ENCODE measurements at regions of chr18 and their contacts with region 1.

Region 1: DNA sequence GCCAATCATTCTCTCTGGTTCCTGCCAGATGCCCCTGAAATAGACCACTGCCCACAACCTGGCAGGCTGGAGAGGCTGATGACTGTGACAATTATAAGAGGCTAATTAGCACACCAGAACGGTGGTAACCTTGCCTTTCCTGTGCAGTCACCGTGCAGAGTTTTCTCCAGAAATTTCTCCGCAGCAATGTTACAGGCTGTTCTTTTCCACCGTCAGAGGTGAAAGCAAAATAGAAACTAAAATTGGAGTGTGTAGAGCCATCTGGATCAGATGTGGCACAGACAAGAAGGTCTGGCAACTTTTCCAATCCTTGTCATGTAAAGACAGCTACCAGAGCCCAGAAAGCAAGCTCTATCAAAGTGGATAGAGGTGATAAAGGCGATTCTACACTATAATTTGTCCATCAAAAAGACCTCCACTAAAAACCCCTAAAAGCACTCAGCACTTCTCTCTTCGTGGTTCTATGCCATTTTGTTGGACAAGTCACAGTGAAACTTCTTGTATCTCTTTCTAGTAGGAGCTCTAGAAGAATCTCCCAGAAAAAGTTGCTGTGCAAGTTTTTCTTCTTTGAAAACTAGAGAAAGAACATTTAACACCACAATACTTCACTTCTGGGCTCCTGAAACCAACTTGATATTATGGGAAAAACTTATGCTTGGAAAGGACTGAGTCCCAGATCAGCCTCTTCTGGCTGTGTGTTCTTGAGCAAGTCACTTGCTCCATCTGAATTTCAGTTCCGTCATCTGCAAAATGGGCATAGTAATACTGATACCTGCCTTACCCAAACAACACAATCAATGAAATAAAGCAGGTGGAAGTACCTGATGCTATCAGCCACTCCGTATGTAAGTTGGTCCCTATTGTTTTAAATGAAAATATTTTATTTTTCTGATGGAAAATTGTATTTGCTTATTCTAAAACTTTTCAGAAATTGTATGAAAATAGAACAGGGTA is 295.6 kb upstream of the DLGAP1 start:
- DNase-seq: no peak
- ATAC-seq: no peak

Region 2: DNA sequence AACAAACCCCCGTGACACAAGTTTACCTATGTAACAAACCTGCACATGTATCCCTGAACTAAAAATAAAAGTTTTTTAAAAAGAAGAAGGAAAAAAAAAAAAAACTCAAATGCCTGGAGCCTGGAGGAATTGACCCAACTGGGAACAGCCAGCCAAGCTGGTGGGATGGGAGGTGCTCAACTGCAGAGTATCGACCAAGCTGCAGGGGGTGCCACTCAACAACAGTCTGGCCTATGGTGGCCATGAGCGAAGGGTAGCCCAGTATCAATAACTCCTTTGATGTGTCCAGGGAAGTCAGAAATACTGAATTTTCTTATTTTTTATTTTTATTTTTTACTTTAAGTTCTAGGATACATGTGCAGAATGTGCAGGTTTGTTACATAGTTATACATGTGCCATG is 14.7 kb after region 1 on chr18:
- intact Hi-C with region 1: loop called (anchors 1 kb)
- DNase-seq: no peak
- ATAC-seq: no peak

Region 3: GRCh38 chr18:4807604-4808293 is 57.1 kb after region 1 on chr18:
- intact Hi-C with region 1: no loop called
- DNase-seq: no peak
- ATAC-seq: no peak

Region 4: GRCh38 chr18:5040476-5040875 is 289.8 kb after region 1 on chr18:
- intact Hi-C with region 1: no loop called
- DNase-seq: no peak
- ATAC-seq: no peak

Region 5: DNA sequence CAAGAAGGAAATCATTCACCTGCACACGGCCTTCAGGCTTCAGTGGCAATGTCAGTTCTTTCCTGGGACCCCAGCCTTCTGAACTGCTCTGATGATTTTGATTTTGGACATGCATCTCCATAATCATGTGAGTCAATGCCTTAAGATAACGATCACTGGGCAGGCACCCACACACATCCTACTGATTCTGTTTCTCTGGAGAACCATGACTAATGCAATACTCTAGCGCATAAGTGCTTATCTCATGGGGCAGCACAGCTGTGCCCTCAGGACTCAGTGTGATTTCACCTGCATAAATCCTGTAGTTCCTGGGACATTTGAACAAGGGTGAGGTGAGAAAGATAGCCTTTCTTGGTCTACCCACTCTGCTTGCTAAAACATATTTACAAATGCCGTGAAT is 301.8 kb after region 1 on chr18:
- intact Hi-C with region 1: no loop called
- DNase-seq: no peak
- ATAC-seq: no peak